ENCODE measurements at regions of chr18 and their contacts with region 1.

Region 1: GRCh38 chr18:58529714-58530354 is 99.1 kb downstream of the ALPK2 start:
- DNase-seq: peak; percentile 63
- H3K4me3 ChIP-seq: no peak overlapping the region
- H3K27ac ChIP-seq: no peak overlapping the region
- H3K27me3 ChIP-seq: no peaks in the 10 kb centered on the region
- CTCF ChIP-seq: peak; percentile 86

Region 2: DNA sequence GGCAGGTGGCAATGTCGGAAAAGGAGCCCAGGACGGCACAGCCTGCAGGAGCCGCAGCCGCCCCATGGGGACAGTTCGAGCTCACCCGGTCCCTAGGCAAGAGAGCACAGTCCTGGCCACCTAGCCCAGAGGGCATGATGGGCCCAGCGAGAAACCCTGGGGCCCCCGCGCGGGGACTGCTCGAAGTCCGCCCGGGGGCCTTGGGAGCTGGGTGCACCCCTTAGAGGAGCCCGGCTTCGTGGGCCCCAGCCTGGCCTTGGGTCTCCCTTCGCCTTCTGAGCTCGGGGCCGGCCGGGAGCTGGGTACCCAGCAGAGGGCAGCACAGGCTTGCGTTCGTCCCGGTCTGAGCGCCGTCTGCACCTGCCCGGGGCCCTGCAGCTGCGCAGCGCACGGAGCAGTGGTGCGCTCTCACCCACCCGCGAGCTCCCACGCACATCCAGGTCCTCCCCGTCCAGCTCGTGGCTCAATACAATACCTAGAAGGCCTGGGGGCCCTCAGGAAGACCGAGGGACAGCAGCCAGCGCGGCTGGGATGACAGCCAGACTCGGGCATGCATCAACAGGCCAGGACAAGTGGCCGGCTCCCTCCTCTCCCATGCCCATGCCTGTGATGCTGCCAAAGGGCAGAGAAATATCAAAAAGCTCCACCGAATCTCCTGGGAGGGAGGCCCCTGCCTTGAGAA is 238.6 kb after region 1 on chr18:
- in situ Hi-C with region 1: loop called (anchors 25 kb)
- DNase-seq: no peak
- H3K4me3 ChIP-seq: peak overlapping the region; percentile 22
- H3K27ac ChIP-seq: no peak overlapping the region
- H3K27me3 ChIP-seq: peaks cover 2% of the 10 kb centered on the region
- CTCF ChIP-seq: peak; percentile 84